ENCODE measurements at regions of chr5 and their contacts with region 1.

Region 1: GRCh38 chr5:128201065-128201926 is 117.7 kb downstream of the SLC12A2 start:
- DNase-seq: peak; percentile 74 to 94 (median 87)
- ATAC-seq: peak; percentile 81 to 87
- H3K4me3 ChIP-seq: peak overlapping the region; percentile 27
- H3K27ac ChIP-seq: no peak overlapping the region
- H3K4me1 ChIP-seq: no peaks in the 10 kb centered on the region
- H3K27me3 ChIP-seq: no peaks in the 10 kb centered on the region

Region 2: GRCh38 chr5:127564002-127564769 is 637.1 kb before region 1 on chr5:
- intact Hi-C with region 1: loop called (anchors 5 to 10 kb)
- DNase-seq: no peak
- ATAC-seq: peak; percentile 64 to 76
- H3K4me3 ChIP-seq: no peak overlapping the region
- H3K27ac ChIP-seq: no peak overlapping the region
- H3K4me1 ChIP-seq: no peaks in the 10 kb centered on the region
- H3K27me3 ChIP-seq: no peaks in the 10 kb centered on the region

Region 3: DNA sequence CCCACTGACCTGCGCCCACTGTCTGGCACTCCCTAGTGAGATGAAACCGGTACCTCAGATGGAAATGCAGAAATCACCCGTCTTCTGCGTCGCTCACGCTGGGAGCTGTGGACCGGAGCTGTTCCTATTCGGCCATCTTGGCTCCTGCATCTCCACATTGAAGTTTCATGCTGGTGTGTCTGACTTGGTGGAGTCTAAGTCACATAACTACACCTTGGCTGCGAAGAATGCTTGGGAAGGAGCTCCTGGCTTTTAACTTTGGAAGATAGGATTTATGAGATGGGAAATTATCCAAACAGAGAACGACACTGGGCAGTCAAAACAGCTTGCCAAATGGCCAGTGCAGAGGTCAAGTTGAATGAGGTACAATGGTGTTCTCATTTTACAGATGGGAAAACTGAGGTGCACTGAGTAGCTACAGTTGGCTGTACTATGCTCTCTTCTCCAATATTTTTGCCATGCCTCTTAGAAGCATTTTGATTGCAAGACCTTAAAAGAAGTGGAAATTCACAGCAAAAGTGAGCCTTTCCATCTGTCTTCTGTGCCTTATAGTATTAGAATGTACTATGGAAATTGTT is 461.4 kb before region 1 on chr5:
- intact Hi-C with region 1: loop called in 1 of 4 experiments (anchors 5 kb)
- DNase-seq: no peak
- ATAC-seq: no peak
- H3K4me3 ChIP-seq: no peak overlapping the region
- H3K27ac ChIP-seq: no peak overlapping the region
- H3K4me1 ChIP-seq: no peaks in the 10 kb centered on the region
- H3K27me3 ChIP-seq: no peaks in the 10 kb centered on the region